Activated naive CD4-positive, alpha-beta T cell treated with anti-CD3 and anti-CD28 coated beads, Interleukin-2, amount 10 ng/mL, durations not matched to agents 7 days and 5 days (primary cell): ENCODE measurements at regions of chr1 and their contacts with region 1.

Region 1: DNA sequence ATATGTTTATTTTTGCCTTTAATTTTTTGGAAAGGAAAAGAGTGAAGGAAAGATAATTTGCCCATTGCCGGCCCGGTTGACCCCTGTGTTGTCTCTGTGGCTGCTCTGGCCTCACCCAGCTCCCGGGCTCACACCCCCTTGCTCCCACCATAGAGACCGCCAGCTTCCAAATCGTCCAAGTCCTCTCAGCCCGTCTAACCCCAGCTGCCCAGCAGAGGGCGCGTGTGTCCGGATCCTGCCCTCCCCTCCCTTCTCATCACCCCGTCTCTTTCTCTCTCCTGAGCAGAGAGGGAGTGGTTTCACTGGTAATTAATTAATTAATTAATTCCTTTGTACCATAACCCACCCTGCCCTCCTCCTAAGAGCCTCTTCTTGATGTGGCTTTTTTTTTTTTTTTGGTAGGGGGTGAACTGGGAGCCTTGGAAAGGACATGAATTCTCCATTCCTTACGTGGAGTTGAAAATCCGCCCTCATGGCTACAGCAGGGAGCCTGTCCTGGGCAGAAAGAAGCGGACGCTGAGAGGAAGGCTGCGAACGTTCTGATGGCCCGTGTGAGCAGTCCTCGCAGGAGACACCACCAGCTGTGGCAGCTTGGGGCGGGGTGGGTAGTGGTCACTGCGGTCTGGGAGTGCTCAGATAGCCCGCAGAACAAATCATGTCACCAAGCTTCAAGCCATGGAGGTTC is 45.9 kb downstream of the KIAA0040 start:
- DNase-seq: peak; percentile 78
- H3K4me3 Mint-ChIP-seq: no peak overlapping the region
- H3K27ac Mint-ChIP-seq: peak overlapping the region; percentile 47
- H3K4me1 Mint-ChIP-seq: peaks cover 5% of the 10 kb centered on the region
- H3K27me3 Mint-ChIP-seq: peaks cover 48% of the 10 kb centered on the region

Region 2: GRCh38 chr1:174922121-174922520 is 224.6 kb before region 1 on chr1:
- CTCF ChIA-PET with region 1: no interaction called
- DNase-seq: no peak
- H3K4me3 Mint-ChIP-seq: no peak overlapping the region
- H3K27ac Mint-ChIP-seq: no peak overlapping the region
- H3K4me1 Mint-ChIP-seq: peaks cover under 1% of the 10 kb centered on the region
- H3K27me3 Mint-ChIP-seq: no peaks in the 10 kb centered on the region

Region 3: DNA sequence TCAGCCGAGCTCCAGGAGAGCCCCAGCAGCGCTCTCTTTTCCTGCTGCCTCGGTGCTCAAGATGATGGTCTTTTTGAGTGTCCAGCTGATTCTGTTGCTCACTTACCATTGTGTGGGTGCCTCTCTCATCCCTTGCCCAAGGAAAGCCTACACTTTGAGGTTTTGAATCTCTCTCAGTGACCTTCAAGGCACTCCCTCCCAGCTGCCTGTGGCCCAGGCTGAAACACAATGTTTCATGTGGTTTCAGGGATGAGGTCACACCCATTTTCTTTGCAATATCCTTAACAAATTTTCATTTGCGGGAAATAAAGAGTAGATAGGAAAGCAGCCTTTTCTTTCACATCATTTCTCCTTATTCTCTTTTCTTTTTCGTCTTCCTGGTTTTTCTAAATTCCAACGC is 110.8 kb before region 1 on chr1:
- CTCF ChIA-PET with region 1: interaction called, 14 read pairs
- DNase-seq: no peak
- H3K4me3 Mint-ChIP-seq: no peak overlapping the region
- H3K27ac Mint-ChIP-seq: no peak overlapping the region
- H3K4me1 Mint-ChIP-seq: no peaks in the 10 kb centered on the region
- H3K27me3 Mint-ChIP-seq: peaks cover 16% of the 10 kb centered on the region

Region 4: DNA sequence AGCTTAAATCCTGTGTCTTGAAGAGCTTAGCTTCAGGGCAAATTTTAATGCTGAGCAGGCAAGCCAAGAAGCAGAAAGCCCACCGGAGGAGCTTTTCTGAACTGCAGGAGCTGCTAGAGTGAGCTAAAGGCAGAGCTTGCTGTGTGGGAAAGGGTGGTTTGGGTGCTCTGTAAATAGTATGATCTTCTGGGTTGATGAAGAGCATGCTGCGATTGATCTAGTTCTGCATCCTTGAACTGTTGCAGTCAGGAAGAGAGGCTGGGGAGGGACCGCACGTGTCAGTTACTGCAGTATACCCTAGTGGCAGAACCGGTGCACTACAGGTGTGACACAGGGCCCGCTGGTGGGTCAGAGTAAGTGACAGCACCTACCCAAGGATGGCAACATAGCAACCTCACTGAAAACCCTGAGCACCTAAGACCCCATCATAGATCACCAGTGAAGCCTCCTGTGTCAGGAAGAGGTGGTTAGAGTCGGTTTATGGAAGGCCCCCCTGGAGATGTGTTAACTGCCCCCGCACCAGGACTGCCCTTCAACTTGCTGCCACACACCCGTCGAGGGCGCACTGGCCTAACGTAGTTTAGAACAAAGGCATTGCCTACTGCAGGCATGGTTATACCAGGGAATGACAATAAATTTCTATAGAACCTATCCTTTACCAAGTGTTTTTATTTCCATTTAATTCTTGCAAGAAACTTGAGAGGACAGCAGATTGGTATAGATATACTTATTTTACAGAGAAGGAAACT is 191.9 kb after region 1 on chr1:
- CTCF ChIA-PET with region 1: interaction called, 17 read pairs
- DNase-seq: peak; percentile 76
- H3K4me3 Mint-ChIP-seq: no peak overlapping the region
- H3K27ac Mint-ChIP-seq: no peak overlapping the region
- H3K4me1 Mint-ChIP-seq: no peaks in the 10 kb centered on the region
- H3K27me3 Mint-ChIP-seq: peaks cover 46% of the 10 kb centered on the region